K562 (cell line): ENCODE measurements at regions of chr15 and their contacts with region 1.

Region 1: GRCh38 chr15:64247906-64248541 is 85.2 kb upstream of the PPIB start:
- DNase-seq: peak; percentile 45 to 78 (median 61)
- ATAC-seq: peak; percentile 72
- H3K4me3 ChIP-seq: no peak overlapping the region
- H3K27ac ChIP-seq: peak overlapping the region; percentile 84
- H3K4me1 ChIP-seq: peaks cover 0 to 18% of the 10 kb centered on the region in 2 experiments; a peak in 4 of 5 replicates
- H3K27me3 ChIP-seq: no peaks in the 10 kb centered on the region
- CTCF ChIP-seq: no peak
- EP300 ChIP-seq: no peak
- POLR2A ChIP-seq: no peak
- RAD21 ChIP-seq: no peak

Region 2: DNA sequence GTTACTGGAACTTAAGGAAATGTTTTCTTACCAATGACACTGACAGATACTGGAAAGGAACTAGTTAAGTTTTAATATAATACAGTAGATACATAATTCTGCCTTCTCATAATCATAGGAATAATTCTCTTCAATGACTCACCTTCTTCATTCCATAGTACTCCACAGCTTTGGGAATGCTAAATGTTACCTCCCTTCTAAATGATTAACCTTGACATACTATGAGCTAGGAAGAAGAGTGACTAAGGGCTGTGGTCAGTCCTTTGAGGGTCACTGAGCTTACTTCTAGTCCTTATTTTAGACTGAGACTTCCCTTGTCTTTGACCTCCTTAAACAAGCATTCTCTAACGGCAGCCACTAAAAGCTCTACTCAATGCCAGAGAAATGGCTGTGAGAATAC is 15.6 kb before region 1 on chr15:
- CTCF ChIA-PET with region 1: no interaction called
- POLR2A ChIA-PET with region 1: interaction called, 40 read pairs
- in situ Hi-C with region 1: no loop called
- intact Hi-C with region 1: no loop called
- DNase-seq: peak in 3 of 4 experiments; percentile 15 to 57 (median 17)
- ATAC-seq: peak; percentile 79
- H3K4me3 ChIP-seq: no peak overlapping the region
- H3K27ac ChIP-seq: peak overlapping the region; percentile 76
- H3K4me1 ChIP-seq: peaks cover 0 to 30% of the 10 kb centered on the region in 2 experiments
- H3K27me3 ChIP-seq: no peaks in the 10 kb centered on the region
- CTCF ChIP-seq: no peak
- EP300 ChIP-seq: no peak
- POLR2A ChIP-seq: no peak
- RAD21 ChIP-seq: no peak

Region 3: GRCh38 chr15:64263567-64263966 is 15.5 kb after region 1 on chr15:
- CTCF ChIA-PET with region 1: no interaction called
- POLR2A ChIA-PET with region 1: interaction called, 30 read pairs
- in situ Hi-C with region 1: no loop called
- intact Hi-C with region 1: no loop called
- DNase-seq: no peak
- ATAC-seq: no peak
- H3K4me3 ChIP-seq: no peak overlapping the region
- H3K27ac ChIP-seq: no peak overlapping the region
- H3K4me1 ChIP-seq: no peaks in the 10 kb centered on the region; a peak in 1 of 5 replicates
- H3K27me3 ChIP-seq: no peaks in the 10 kb centered on the region
- CTCF ChIP-seq: no peak
- EP300 ChIP-seq: no peak
- POLR2A ChIP-seq: no peak
- RAD21 ChIP-seq: no peak